Left cardiac atrium (tissue), 4 donors: ENCODE measurements at regions of chr9 and their contacts with region 1.

Region 1: DNA sequence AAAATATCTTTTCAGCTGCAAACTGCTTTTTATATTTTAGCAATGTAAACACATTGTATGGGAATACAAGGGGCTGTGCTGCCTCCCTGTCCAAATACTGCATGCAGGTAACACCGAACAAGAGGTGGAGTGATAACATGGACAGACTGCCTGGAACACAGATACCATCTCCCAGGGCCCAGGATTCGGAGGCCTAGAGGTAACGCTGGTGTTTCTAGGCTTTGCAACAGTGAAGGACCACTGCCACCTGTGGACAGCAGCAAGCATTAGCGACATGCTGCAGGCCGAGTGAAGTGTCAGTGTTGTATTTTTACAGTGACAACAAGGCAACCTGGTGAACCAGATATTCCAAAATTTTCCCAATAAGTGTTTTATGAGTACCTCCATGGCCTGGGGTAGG is 379.1 kb downstream of the DMRT2 start:
- DNase-seq: no peak
- ATAC-seq: peak; percentile 49 to 53

Region 2: GRCh38 chr9:1100945-1101344 is 328.4 kb before region 1 on chr9:
- intact Hi-C with region 1: loop called in 1 of 2 experiments (anchors 2 kb)
- DNase-seq: peak; percentile 45
- ATAC-seq: peak; percentile 68 to 81